Activated CD4-positive, alpha-beta memory T cell treated with anti-CD3 and anti-CD28 coated beads, Interleukin-2, amount 10 ng/mL, durations not matched to agents 7 days and 5 days (primary cell): ENCODE measurements at regions of chr14 and their contacts with region 1.

Region 1: DNA sequence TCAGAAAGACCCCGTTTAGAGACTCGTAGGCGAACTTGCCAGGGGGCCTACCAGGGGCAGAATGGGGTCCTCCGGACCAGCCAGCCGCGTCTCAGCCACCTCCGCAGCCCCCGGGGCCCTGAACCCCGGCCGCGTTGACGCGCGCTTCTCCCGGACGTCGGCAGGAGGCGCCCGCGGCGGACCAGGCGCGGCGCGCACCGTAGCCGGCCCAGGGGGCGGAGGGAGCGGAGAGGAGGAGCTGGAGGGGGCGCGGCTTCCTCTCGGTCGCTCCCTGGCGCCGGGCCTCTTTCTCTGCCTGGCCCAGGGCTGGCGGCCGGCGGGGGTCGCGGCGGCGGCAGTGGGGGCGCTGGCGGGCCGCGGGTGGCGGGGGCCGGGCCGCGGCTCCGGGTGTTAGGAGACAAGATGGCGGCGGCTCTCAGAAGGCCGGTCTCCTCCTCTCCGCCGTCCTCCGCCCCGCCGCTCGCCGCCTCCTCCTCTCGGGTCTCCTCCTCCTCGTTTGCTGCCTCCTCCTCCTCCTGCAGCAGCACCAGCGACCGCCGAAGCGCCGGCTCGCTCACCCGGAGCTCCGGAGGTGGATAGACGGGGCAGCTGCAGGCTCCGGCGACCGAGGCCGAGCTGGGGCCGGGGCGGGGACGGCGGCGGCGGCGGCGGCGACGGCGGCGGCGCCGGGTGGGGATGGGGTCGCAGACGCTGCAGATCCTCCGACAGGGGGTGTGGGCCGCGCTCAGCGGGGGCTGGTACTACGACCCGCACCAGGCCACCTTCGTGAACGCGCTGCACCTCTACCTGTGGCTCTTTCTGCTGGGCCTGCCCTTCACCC is at the start of gene PCNX1:
- DNase-seq: peak; percentile 90
- H3K4me3 Mint-ChIP-seq: peak within 1 kb of the TSS; percentile 81
- H3K27ac Mint-ChIP-seq: peak within 1 kb of the TSS; percentile 86
- H3K4me1 Mint-ChIP-seq: peaks cover 60% of the 10 kb centered on the region
- H3K27me3 Mint-ChIP-seq: peaks cover 8% of the 10 kb centered on the region
- total RNA-seq, gene PCNX1: 56.9 to 60.4 TPM

Region 2: DNA sequence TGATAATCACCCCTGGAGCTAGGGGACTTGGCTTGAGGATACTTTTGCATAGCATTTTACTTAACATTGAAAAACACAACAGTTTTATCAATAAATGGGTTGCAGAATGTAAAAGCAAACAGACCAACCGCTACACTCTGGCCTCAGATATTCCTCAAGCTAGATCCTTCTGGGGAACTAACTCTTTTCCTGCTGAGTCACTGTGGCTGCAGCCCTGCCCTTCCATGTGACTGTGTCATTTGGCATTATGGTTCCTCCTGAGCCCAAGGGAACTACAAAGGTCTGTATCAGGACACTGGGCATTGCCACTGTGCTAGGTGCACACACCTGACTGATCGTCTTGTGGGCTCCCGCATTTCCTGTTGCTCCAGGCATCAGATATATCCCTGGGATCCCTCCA is 209.1 kb before region 1 on chr14:
- CTCF ChIA-PET with region 1: no interaction called
- POLR2A ChIA-PET with region 1: no interaction called
- DNase-seq: no peak
- H3K4me3 Mint-ChIP-seq: no peak overlapping the region
- H3K27ac Mint-ChIP-seq: no peak overlapping the region
- H3K4me1 Mint-ChIP-seq: no peaks in the 10 kb centered on the region
- H3K27me3 Mint-ChIP-seq: no peaks in the 10 kb centered on the region

Region 3: DNA sequence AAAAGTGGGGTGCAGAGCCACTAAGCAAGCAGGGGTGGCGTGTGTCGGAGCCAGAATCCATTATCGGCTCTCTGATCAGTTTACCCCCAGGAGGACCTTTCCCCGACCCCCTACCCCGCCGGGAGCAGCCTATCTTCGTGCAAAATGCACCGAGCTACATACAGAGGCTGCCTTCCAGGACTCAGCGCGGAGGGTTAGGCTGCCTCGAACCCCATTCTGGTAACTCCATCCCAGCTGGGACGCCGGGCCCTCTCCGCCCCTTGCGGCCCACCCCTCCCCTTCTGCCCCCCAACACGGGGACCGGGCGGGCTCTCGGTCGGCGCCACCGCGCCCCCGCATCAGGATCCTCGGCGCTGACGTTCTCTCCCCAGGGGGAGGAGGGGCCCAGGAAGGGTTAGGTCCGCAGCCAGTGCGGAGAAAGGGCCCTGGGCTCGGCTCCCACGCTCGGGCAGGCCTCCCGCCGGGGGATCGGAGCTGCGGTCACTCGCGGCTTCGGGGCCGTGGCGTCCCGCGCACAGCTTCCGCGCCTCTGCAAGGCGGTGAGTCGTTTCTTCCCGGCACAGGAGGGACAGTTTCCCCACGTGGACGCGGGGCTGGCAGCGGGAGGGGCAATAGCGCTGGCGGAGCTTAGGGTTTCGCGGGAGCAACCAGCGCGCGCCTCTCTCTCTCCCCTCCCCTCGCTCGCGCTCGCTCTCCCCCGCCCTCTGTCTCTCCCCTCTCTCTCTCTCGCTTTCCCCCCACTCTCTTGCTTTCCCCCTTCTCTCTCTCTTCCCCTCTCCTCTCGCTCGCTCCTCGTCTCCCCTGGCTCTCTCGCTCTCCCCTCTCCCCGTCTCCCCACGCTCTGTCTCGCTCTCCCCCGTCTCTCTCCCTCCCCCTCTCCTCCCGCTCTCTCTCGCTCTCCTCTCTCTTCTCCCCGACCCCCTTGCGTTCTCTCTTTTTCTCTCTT is 85.5 kb before region 1 on chr14:
- CTCF ChIA-PET with region 1: interaction called, 36 read pairs
- POLR2A ChIA-PET with region 1: interaction called, 26 read pairs
- DNase-seq: peak; percentile 60
- H3K4me3 Mint-ChIP-seq: peak overlapping the region; percentile 76
- H3K27ac Mint-ChIP-seq: no peak overlapping the region
- H3K4me1 Mint-ChIP-seq: peaks cover 18% of the 10 kb centered on the region
- H3K27me3 Mint-ChIP-seq: peaks cover 36% of the 10 kb centered on the region

Region 4: DNA sequence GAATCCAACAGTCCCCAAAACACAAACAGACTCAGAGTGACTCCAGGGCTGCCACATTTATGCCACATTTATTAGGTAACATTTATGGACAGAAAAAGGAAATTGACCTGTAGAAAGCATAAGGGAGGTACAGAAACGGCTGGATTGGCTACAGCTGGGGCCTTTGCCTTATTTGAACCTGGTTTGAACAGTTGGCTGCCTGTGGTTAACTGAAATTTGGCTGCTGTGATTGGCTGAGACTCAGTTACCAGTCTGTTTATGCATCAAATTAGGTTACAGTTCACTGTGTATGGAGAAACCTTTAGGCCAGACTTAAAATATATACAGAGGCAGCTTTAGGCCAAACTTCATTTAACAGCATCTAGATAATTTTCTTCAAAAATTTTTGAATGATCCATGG is 27.9 kb before region 1 on chr14:
- CTCF ChIA-PET with region 1: interaction called, 67 read pairs
- POLR2A ChIA-PET with region 1: interaction called, 91 read pairs
- DNase-seq: no peak
- H3K4me3 Mint-ChIP-seq: no peak overlapping the region
- H3K27ac Mint-ChIP-seq: no peak overlapping the region
- H3K4me1 Mint-ChIP-seq: peaks cover 27% of the 10 kb centered on the region
- H3K27me3 Mint-ChIP-seq: peaks cover 3% of the 10 kb centered on the region

Region 5: GRCh38 chr14:70934502-70935134 is 27.2 kb after region 1 on chr14:
- CTCF ChIA-PET with region 1: interaction called, 15 read pairs
- POLR2A ChIA-PET with region 1: interaction called, 16 read pairs
- DNase-seq: no peak
- H3K4me3 Mint-ChIP-seq: peak overlapping the region; percentile 55
- H3K27ac Mint-ChIP-seq: peak overlapping the region; percentile 85
- H3K4me1 Mint-ChIP-seq: peaks cover 58% of the 10 kb centered on the region
- H3K27me3 Mint-ChIP-seq: no peaks in the 10 kb centered on the region

Region 6: DNA sequence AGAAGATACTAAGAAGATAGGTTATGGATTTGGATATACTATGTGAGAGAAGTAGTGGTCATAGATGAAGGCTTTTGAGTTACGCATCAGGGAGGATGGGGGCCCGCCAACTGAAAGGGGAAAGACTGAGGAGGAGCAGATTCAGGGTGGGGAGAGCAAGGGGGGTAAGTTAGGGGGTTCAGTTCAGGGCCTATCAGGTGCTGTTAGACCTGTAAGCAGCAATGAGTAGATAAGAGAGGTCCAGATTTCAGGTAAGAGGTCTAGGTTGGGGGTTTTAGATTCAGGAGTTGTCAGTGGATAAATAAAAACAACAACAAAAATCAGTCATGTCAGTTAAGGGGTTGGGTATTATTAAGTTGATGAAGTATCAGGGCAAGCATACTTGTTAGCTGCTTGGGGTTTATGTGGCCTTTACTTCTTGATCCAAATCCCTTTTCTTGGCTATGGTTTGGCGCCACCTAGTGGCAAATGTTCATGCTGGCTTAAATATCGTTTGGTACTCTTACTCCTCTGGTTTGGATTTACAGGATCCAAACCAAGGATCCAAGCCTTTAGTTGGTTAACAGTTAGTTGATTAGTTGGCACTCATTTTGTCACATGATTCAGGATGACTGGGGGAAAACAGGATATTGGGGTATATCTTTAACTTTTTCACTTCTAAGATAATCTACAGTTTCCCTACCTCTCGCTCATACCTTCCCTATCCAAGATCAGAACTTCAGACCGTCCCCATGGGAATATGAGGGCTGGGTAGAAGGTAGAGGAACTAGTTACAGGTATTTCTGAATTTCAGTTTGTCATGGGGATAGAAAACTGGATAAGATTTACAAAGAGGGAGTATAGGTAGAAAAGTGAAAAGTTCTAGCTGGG is 65.0 kb after region 1 on chr14:
- CTCF ChIA-PET with region 1: interaction called, 15 read pairs
- POLR2A ChIA-PET with region 1: interaction called, 11 read pairs
- DNase-seq: peak; percentile 86
- H3K4me3 Mint-ChIP-seq: no peak overlapping the region
- H3K27ac Mint-ChIP-seq: no peak overlapping the region
- H3K4me1 Mint-ChIP-seq: peaks cover 22% of the 10 kb centered on the region
- H3K27me3 Mint-ChIP-seq: no peaks in the 10 kb centered on the region